Thyroid gland (tissue), 4 donors: ENCODE measurements at regions of chr4 and their contacts with region 1.

Region 1: GRCh38 chr4:83034630-83035494 is at the start of gene COPS4:
- DNase-seq: peak; percentile 98 to 99
- H3K4me3 ChIP-seq: peak within 1 kb of the TSS; percentile 44 to 63 (median 56)
- H3K27ac ChIP-seq: peak within 1 kb of the TSS; percentile 70 to 89 (median 72)
- H3K4me1 ChIP-seq: peaks cover 14 to 22% of the 10 kb centered on the region in 2 donors
- H3K27me3 ChIP-seq: no peaks in the 10 kb centered on the region
- CTCF ChIP-seq: peak in 3 of 6 experiments; percentile 7 to 33 (median 25)
- POLR2A ChIP-seq: peak in 1 of 2 donors; percentile 74
- total RNA-seq, gene COPS4: 35.3 to 69.9 (median 50.4) TPM

Region 2: DNA sequence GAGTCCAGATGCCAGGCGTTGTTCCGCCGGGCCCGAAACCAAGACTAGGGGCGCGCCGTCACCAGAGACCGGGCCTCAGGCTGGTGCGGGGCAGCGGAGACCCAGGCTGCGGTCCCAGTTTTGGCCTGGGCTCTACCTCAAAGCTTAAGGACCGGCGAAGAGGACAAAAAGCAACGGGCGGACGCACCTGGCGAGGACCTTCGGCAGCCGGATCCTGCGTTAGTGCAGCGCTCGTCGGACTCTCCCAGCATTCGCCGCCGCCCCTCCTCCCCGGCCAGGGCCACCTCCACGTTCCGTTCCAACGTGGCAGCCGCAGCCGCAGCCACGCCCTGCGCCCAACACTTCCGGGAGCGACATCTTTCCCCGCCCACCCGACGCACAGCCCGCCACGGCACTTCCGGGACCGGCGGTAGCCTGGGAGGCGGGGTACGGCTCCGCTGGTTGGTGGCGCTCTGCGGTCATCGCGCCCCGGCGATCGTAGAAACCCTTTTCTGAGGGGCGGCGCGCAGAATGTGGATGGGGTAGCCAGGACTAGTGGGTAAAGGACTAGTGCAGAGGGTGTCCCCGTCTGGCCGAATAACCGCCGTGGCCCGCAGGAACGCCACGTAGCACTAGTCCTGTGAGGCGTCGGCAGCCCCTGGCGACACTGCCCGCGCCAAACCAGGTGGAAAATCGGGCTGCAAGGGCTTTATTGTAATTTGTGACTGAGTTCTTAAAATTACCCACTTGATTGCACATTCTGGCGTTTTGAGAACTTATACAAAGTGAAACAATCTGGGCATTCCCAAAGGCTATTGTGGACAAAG is 143.8 kb before region 1 on chr4 and contains the start of gene SEC31A:
- intact Hi-C with region 1: loop called (anchors 5 kb)
- DNase-seq: peak; percentile 96
- H3K4me3 ChIP-seq: peak within 1 kb of the TSS; percentile 70 to 92 (median 81)
- H3K27ac ChIP-seq: peak within 1 kb of the TSS; percentile 94 to 98 (median 98)
- H3K4me1 ChIP-seq: peaks cover 13 to 15% of the 10 kb centered on the region in 2 donors
- H3K27me3 ChIP-seq: no peaks in the 10 kb centered on the region
- CTCF ChIP-seq: peak in 1 of 6 experiments; percentile 13
- POLR2A ChIP-seq: peak; percentile 42 to 96
- total RNA-seq, gene SEC31A: 263 to 367 (median 292) TPM